Caco-2 (cell line): ENCODE measurements at regions of chr11 and their contacts with region 1.

Region 1: GRCh38 chr11:64448599-64449556 is 89.9 kb downstream of the RPS6KA4 start:
- DNase-seq: peak; percentile 90 to 92
- H3K4me3 ChIP-seq: peak overlapping the region; percentile 53
- H3K4me3 Mint-ChIP-seq: peak overlapping the region; percentile 89
- H3K27ac Mint-ChIP-seq: peak overlapping the region; percentile 67
- H3K4me1 ChIP-seq: peaks cover 17% of the 10 kb centered on the region
- H3K4me1 Mint-ChIP-seq: peaks cover 20% of the 10 kb centered on the region
- H3K27me3 ChIP-seq: no peaks in the 10 kb centered on the region; the same call in 1 of the 2 replicates
- H3K27me3 Mint-ChIP-seq: no peaks in the 10 kb centered on the region
- CTCF ChIP-seq: peak; percentile 88 to 97

Region 2: DNA sequence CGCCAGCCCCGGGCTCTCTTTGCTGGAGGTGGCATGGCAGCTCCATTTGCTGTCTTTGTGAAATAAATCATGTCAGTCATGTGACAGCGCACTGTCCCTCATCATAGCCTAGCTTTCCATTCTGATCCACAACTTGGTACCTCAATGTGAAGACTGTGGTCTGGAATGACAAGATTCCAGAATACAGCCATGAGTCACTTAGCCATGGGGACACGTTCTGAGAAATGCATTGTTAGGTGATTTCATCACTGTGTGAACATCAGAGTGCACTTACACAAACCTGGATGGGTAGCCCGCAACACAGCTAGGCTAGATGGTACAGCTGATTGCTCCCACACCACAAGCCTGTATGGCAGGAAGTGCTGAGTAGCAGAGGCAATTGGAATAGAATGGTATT is 62.6 kb before region 1 on chr11:
- CTCF ChIA-PET with region 1: interaction called, 21 read pairs
- POLR2A ChIA-PET with region 1: no interaction called
- intact Hi-C with region 1: loop called (anchors 2 kb)
- DNase-seq: peak; percentile 71
- H3K4me3 ChIP-seq: no peak overlapping the region
- H3K4me3 Mint-ChIP-seq: no peak overlapping the region
- H3K27ac Mint-ChIP-seq: peak overlapping the region; percentile 85
- H3K4me1 ChIP-seq: peaks cover 52% of the 10 kb centered on the region
- H3K4me1 Mint-ChIP-seq: peaks cover 41% of the 10 kb centered on the region
- H3K27me3 ChIP-seq: no peaks in the 10 kb centered on the region
- H3K27me3 Mint-ChIP-seq: no peaks in the 10 kb centered on the region
- CTCF ChIP-seq: no peak

Region 3: DNA sequence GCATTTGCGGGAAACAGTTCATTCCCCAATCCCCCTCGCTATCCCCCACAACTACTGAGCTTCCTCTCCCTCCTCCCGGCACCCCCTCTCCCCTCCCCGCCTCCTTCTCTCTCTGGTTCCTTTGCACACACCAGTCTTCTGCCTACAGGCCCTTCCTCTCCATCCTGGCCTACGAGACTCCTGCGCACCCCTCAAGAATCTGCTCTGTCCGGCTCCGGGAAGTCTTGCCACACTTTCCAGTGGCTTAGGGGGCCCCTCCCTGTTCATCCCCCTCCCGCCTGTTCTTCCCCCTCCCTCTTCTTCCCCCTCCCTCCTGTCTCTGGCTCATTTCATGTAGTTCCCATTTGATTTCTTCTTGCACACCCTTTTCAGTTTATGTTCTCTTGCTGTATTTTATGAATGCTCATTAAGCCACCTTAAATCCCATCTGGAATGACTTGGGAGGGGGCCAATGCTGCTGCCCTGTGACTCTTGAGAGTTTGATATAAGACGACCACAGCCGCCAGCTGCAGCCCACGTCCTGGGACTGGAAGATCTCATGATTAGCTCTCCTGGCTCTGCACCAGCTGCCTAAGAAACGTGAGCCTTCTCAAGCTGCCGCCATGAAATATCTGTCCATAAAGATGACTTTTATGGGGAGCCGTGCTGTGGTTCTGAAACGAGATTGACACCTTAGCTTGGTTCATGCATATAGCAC is 39.0 kb before region 1 on chr11:
- CTCF ChIA-PET with region 1: interaction called, 22 read pairs
- POLR2A ChIA-PET with region 1: interaction called, 4 read pairs
- intact Hi-C with region 1: loop called (anchors 1 kb)
- DNase-seq: no peak
- H3K4me3 ChIP-seq: no peak overlapping the region
- H3K4me3 Mint-ChIP-seq: no peak overlapping the region
- H3K27ac Mint-ChIP-seq: peak overlapping the region; percentile 76
- H3K4me1 ChIP-seq: peaks cover 48% of the 10 kb centered on the region
- H3K4me1 Mint-ChIP-seq: peaks cover 37% of the 10 kb centered on the region
- H3K27me3 ChIP-seq: no peaks in the 10 kb centered on the region
- H3K27me3 Mint-ChIP-seq: no peaks in the 10 kb centered on the region
- CTCF ChIP-seq: no peak

Region 4: GRCh38 chr11:64430629-64431028 is 18.2 kb before region 1 on chr11:
- CTCF ChIA-PET with region 1: interaction called, 15 read pairs
- POLR2A ChIA-PET with region 1: interaction called, 4 read pairs
- intact Hi-C with region 1: no loop called
- DNase-seq: no peak
- H3K4me3 ChIP-seq: no peak overlapping the region
- H3K4me3 Mint-ChIP-seq: peak overlapping the region; percentile 37
- H3K27ac Mint-ChIP-seq: peak overlapping the region; percentile 31
- H3K4me1 ChIP-seq: peaks cover 36% of the 10 kb centered on the region
- H3K4me1 Mint-ChIP-seq: peaks cover 23% of the 10 kb centered on the region
- H3K27me3 ChIP-seq: no peaks in the 10 kb centered on the region
- H3K27me3 Mint-ChIP-seq: no peaks in the 10 kb centered on the region
- CTCF ChIP-seq: no peak

Region 5: GRCh38 chr11:64566042-64566914 is 117.4 kb after region 1 on chr11:
- CTCF ChIA-PET with region 1: interaction called, 5 read pairs
- POLR2A ChIA-PET with region 1: no interaction called
- intact Hi-C with region 1: loop called (anchors 5 kb)
- DNase-seq: peak; percentile 96 to 99
- H3K4me3 ChIP-seq: peak overlapping the region; percentile 13; the same call in 1 of the 2 replicates
- H3K4me3 Mint-ChIP-seq: peak overlapping the region; percentile 69
- H3K27ac Mint-ChIP-seq: peak overlapping the region; percentile 99
- H3K4me1 ChIP-seq: peaks cover 35% of the 10 kb centered on the region
- H3K4me1 Mint-ChIP-seq: peaks cover 15% of the 10 kb centered on the region
- H3K27me3 ChIP-seq: no peaks in the 10 kb centered on the region
- H3K27me3 Mint-ChIP-seq: no peaks in the 10 kb centered on the region
- CTCF ChIP-seq: no peak

Region 6: GRCh38 chr11:64644647-64645275 is 195.9 kb after region 1 on chr11:
- CTCF ChIA-PET with region 1: interaction called, 35 read pairs
- POLR2A ChIA-PET with region 1: no interaction called
- intact Hi-C with region 1: no loop called
- DNase-seq: peak in 1 of 2 experiments; percentile 34
- H3K4me3 ChIP-seq: no peak overlapping the region
- H3K4me3 Mint-ChIP-seq: no peak overlapping the region
- H3K27ac Mint-ChIP-seq: no peak overlapping the region
- H3K4me1 ChIP-seq: 0 out of 2 replicates have a peak, but pooled peaks cover 9% of the 10 kb centered on the region
- H3K4me1 Mint-ChIP-seq: no peaks in the 10 kb centered on the region
- H3K27me3 ChIP-seq: no peaks in the 10 kb centered on the region; the same call in 1 of the 2 replicates
- H3K27me3 Mint-ChIP-seq: peaks cover 3% of the 10 kb centered on the region
- CTCF ChIP-seq: peak; percentile 19 to 26

Region 7: GRCh38 chr11:64652586-64653387 is 203.9 kb after region 1 on chr11:
- CTCF ChIA-PET with region 1: interaction called, 35 read pairs
- POLR2A ChIA-PET with region 1: no interaction called
- intact Hi-C with region 1: loop called (anchors 1 kb)
- DNase-seq: peak; percentile 86 to 93
- H3K4me3 ChIP-seq: no peak overlapping the region
- H3K4me3 Mint-ChIP-seq: no peak overlapping the region
- H3K27ac Mint-ChIP-seq: no peak overlapping the region
- H3K4me1 ChIP-seq: peaks cover 17% of the 10 kb centered on the region
- H3K4me1 Mint-ChIP-seq: peaks cover 15% of the 10 kb centered on the region
- H3K27me3 ChIP-seq: no peaks in the 10 kb centered on the region
- H3K27me3 Mint-ChIP-seq: no peaks in the 10 kb centered on the region
- CTCF ChIP-seq: peak; percentile 91 to 93